ENCODE measurements at regions of chr1 and their contacts with region 1.

Region 1: GRCh38 chr1:84506002-84506728 is at the starts of genes GNG5 and SPATA1:
- DNase-seq: peak; percentile 100
- total RNA-seq, gene GNG5: 133 TPM
- total RNA-seq, gene SPATA1: 1.2 TPM

Region 2: GRCh38 chr1:84478876-84479868 is 27.0 kb before region 1 on chr1 and contains the start of gene RPF1:
- intact Hi-C with region 1: loop called (anchors 2 kb)
- DNase-seq: peak; percentile 85
- total RNA-seq, gene RPF1: 34.3 TPM

Region 3: GRCh38 chr1:84573967-84574842 is 68.0 kb after region 1 on chr1 and contains the start of gene CTBS:
- intact Hi-C with region 1: loop called (anchors 1 kb)
- DNase-seq: peak; percentile 96
- total RNA-seq, gene CTBS: 11.6 TPM

Region 4: GRCh38 chr1:84611796-84612195 is 105.6 kb after region 1 on chr1:
- intact Hi-C with region 1: no loop called
- DNase-seq: no peak

Region 5: DNA sequence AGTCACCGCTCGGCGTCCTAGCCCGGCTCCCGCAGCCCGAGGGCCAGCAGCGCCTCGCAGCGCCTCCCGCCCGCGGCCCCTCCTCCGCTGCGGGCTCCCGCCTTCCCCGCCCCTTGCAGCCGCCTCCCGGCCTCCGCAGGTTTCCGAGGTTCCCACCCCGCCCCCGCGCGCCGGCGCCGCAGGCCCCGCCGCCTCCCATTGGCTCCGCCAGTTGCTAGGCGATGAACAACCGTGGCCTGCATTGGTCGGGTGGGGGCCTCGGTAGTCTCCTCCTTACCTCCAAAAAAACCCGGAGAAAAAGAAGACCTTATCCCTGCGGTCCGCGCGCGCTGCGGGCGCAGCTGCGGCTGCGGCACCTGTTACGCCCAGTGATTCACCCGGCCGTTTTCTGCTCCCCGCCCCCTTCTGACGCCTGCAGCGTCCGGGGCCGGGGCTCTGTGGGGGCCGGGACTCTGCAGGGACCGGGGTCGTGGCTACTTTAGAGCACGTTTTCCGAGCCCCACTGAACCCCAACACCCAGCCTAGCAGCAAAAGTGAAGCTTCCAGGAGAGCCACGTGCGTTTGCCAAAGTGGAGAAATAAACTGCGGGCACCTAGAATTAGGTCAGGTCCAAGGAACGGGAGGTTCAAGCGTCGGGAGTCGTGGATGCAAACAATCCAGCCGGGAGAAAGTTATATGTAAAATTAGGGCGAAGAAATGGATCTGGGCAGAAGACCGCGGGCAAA is 184.4 kb after region 1 on chr1 and contains the start of gene SSX2IP:
- intact Hi-C with region 1: loop called (anchors 2 kb)
- DNase-seq: peak; percentile 98
- total RNA-seq, gene SSX2IP: 12.0 TPM